T-cell (primary cell): ENCODE measurements at regions of chr14 and their contacts with region 1.

Region 1: DNA sequence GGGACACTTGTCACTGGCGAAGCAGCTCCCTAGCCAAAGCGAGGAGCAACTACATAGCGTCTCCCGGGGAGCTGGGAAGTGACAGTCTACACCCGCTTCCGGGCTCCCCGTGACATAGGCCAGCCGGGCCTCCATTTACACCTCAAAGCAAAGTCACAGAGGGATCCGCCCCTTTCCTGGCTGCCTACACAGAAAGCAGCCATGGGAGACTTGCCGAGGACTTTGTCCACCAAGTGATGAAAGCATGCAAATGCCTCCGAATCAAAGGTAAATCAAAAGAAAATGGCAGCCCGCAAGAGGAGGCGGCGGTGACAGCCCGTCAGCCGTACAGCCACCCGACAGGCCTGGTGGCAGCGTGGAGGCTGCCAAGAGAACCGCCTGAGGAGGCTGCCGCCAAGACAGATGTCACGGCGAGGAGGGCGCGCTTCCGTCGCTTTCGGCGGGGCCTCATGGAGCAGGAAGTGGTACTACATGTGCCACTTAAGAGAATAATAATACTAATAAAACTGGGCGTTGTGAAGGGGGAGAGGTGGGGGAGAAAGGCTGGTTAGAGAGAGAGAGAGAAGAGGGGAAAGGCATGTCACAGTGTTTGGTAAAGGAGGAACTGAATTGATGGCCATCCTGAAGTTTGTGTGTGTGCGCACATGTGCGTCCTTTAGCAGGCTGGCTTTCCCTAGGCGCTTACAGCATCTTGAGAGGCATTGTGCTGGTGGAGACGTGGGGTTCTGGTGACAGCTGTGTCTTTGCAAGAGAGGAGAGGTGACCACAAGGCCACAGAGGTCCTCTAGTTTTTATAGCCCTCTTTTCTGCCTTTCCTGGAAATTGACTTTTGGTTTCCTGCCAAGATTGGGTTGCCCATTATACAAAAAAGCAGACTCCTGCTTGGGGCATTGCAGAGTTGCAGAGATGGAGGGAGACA is 661.7 kb downstream of the VRK1 start:
- DNase-seq: peak; percentile 70 to 88 (median 78)
- ATAC-seq: peak; percentile 83 to 91 (median 88)
- H3K4me3 ChIP-seq: peak overlapping the region; percentile 57 to 60
- H3K4me3 Mint-ChIP-seq: peak overlapping the region; percentile 89 to 93 (median 92)
- H3K27ac ChIP-seq: peak overlapping the region; percentile 92
- H3K27ac Mint-ChIP-seq: peak overlapping the region; percentile 96 to 98
- H3K4me1 ChIP-seq: peaks cover 17 to 53% of the 10 kb centered on the region in 2 experiments
- H3K4me1 Mint-ChIP-seq: peaks cover 53 to 65% (median 62%) of the 10 kb centered on the region in 3 donors
- H3K27me3 ChIP-seq: no peaks in the 10 kb centered on the region
- H3K27me3 Mint-ChIP-seq: no peaks in the 10 kb centered on the region

Region 2: GRCh38 chr14:97416550-97416949 is 42.4 kb before region 1 on chr14:
- CTCF ChIA-PET with region 1: no interaction called
- POLR2A ChIA-PET with region 1: interaction called in 1 of 2 experiments, 16 read pairs
- DNase-seq: no peak
- ATAC-seq: no peak
- H3K4me3 ChIP-seq: no peak overlapping the region
- H3K4me3 Mint-ChIP-seq: no peak overlapping the region
- H3K27ac ChIP-seq: no peak overlapping the region
- H3K27ac Mint-ChIP-seq: no peak overlapping the region
- H3K4me1 ChIP-seq: peaks cover 6 to 11% of the 10 kb centered on the region in 2 experiments
- H3K4me1 Mint-ChIP-seq: peaks cover 1 to 9% (median 8%) of the 10 kb centered on the region in 3 donors
- H3K27me3 ChIP-seq: peaks cover 8 to 14% of the 10 kb centered on the region in 2 experiments
- H3K27me3 Mint-ChIP-seq: peaks cover 0 to 4% of the 10 kb centered on the region in 2 donors